H1 (cell line): ENCODE measurements at regions of chr7 and their contacts with region 1.

Region 1: GRCh38 chr7:111855161-111855856 is 293.0 kb upstream of the IMMP2L start:
- DNase-seq: no peak
- H3K4me3 ChIP-seq: no peak overlapping the region
- H3K27ac ChIP-seq: no peak overlapping the region
- H3K4me1 ChIP-seq: peaks cover 10 to 16% (median 12%) of the 10 kb centered on the region in 4 experiments
- H3K27me3 ChIP-seq: no peaks in the 10 kb centered on the region
- CTCF ChIP-seq: peak; percentile 15 to 74 (median 68)
- EP300 ChIP-seq: no peak
- POLR2A ChIP-seq: no peak
- RAD21 ChIP-seq: peak; percentile 65 to 70

Region 2: GRCh38 chr7:111752022-111752582 is 103.2 kb before region 1 on chr7:
- CTCF ChIA-PET with region 1: interaction called, 274 read pairs
- POLR2A ChIA-PET with region 1: no interaction called
- DNase-seq: peak in 1 of 2 experiments; percentile 86
- H3K4me3 ChIP-seq: no peak overlapping the region
- H3K27ac ChIP-seq: no peak overlapping the region
- H3K4me1 ChIP-seq: peaks cover 0 to 3% (median 0%) of the 10 kb centered on the region in 4 experiments; a peak in 3 of 7 replicates
- H3K27me3 ChIP-seq: no peaks in the 10 kb centered on the region
- CTCF ChIP-seq: peak; percentile 75 to 84 (median 84)
- EP300 ChIP-seq: no peak
- POLR2A ChIP-seq: no peak
- RAD21 ChIP-seq: peak; percentile 76 to 79

Region 3: GRCh38 chr7:111771638-111772037 is 83.7 kb before region 1 on chr7:
- CTCF ChIA-PET with region 1: interaction called, 40 read pairs
- POLR2A ChIA-PET with region 1: no interaction called
- DNase-seq: no peak
- H3K4me3 ChIP-seq: no peak overlapping the region
- H3K27ac ChIP-seq: no peak overlapping the region
- H3K4me1 ChIP-seq: peaks cover 5 to 17% (median 8%) of the 10 kb centered on the region in 4 experiments; a peak in 6 of 7 replicates
- H3K27me3 ChIP-seq: no peaks in the 10 kb centered on the region
- CTCF ChIP-seq: no peak
- EP300 ChIP-seq: no peak
- POLR2A ChIP-seq: no peak
- RAD21 ChIP-seq: no peak

Region 4: GRCh38 chr7:111823826-111824225 is 31.5 kb before region 1 on chr7:
- CTCF ChIA-PET with region 1: interaction called, 16 read pairs
- POLR2A ChIA-PET with region 1: no interaction called
- DNase-seq: no peak
- H3K4me3 ChIP-seq: no peak overlapping the region
- H3K27ac ChIP-seq: no peak overlapping the region
- H3K4me1 ChIP-seq: no peaks in the 10 kb centered on the region
- H3K27me3 ChIP-seq: no peaks in the 10 kb centered on the region
- CTCF ChIP-seq: no peak
- EP300 ChIP-seq: no peak
- POLR2A ChIP-seq: no peak
- RAD21 ChIP-seq: no peak

Region 5: GRCh38 chr7:111867348-111867931 is 12.1 kb after region 1 on chr7:
- CTCF ChIA-PET with region 1: interaction called, 69 read pairs
- POLR2A ChIA-PET with region 1: interaction called, 3 read pairs
- DNase-seq: no peak
- H3K4me3 ChIP-seq: no peak overlapping the region
- H3K27ac ChIP-seq: no peak overlapping the region
- H3K4me1 ChIP-seq: peaks cover 0 to 4% (median 0%) of the 10 kb centered on the region in 4 experiments; a peak in 1 of 7 replicates
- H3K27me3 ChIP-seq: no peaks in the 10 kb centered on the region
- CTCF ChIP-seq: no peak
- EP300 ChIP-seq: no peak
- POLR2A ChIP-seq: no peak
- RAD21 ChIP-seq: no peak

Region 6: GRCh38 chr7:112495810-112496462 is 640.6 kb after region 1 on chr7:
- CTCF ChIA-PET with region 1: interaction called, 20 read pairs
- POLR2A ChIA-PET with region 1: no interaction called
- DNase-seq: peak in 1 of 2 experiments; percentile 23
- H3K4me3 ChIP-seq: no peak overlapping the region
- H3K27ac ChIP-seq: no peak overlapping the region
- H3K4me1 ChIP-seq: no peaks in the 10 kb centered on the region
- H3K27me3 ChIP-seq: no peaks in the 10 kb centered on the region; a peak in 1 of 7 replicates
- CTCF ChIP-seq: peak in 2 of 3 experiments; percentile 71 to 73; a peak in 3 of 4 replicates
- EP300 ChIP-seq: no peak
- POLR2A ChIP-seq: no peak
- RAD21 ChIP-seq: peak; percentile 89 to 94